Activated naive CD4-positive, alpha-beta T cell treated with anti-CD3 and anti-CD28 coated beads for 36 hours (primary cell): ENCODE measurements at regions of chr3 and their contacts with region 1.

Region 1: GRCh38 chr3:186617038-186617946 is 4.4 kb downstream of the AHSG start:
- DNase-seq: peak; percentile 97
- H3K4me3 Mint-ChIP-seq: peak overlapping the region; percentile 56
- H3K27ac Mint-ChIP-seq: peak overlapping the region; percentile 81
- H3K4me1 Mint-ChIP-seq: peaks cover 18% of the 10 kb centered on the region
- H3K27me3 Mint-ChIP-seq: peaks cover 16% of the 10 kb centered on the region

Region 2: DNA sequence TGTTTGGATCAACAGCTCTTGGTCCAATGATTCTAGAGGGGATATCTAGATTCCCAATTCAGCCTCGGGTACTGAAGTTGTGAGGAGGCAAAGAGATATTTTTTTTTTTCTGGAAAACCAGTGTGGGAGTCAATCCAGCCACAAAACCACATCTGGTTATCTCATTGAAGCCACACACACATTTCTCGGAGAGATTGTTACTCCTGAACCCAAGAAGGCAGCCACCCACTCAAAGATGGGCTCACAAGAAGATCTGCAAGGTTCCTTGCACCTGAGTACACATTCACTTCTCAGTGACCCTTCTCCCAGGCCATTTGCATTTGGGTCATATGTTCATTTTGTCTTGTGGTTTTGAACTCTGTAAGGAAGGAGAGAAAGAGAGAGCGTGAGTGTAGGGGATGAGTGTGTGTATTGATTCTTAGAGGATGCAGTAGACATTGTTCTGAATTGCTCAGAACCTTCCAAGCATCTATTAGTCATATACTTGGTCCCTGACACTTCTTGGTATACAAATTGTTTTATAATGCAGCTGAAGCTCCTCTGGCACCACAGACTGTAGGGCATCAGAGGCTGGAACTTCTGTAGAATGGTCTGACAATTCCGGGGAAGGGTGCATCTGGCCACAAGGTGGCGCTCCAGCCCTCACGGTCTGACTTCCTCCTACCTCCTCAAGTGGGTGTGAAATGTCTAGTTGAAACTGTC is 640.2 kb before region 1 on chr3:
- CTCF ChIA-PET with region 1: interaction called, 10 read pairs
- intact Hi-C with region 1: loop called (anchors 1 kb)
- DNase-seq: peak; percentile 94
- H3K4me3 Mint-ChIP-seq: no peak overlapping the region
- H3K27ac Mint-ChIP-seq: no peak overlapping the region
- H3K4me1 Mint-ChIP-seq: peaks cover 9% of the 10 kb centered on the region
- H3K27me3 Mint-ChIP-seq: no peaks in the 10 kb centered on the region

Region 3: DNA sequence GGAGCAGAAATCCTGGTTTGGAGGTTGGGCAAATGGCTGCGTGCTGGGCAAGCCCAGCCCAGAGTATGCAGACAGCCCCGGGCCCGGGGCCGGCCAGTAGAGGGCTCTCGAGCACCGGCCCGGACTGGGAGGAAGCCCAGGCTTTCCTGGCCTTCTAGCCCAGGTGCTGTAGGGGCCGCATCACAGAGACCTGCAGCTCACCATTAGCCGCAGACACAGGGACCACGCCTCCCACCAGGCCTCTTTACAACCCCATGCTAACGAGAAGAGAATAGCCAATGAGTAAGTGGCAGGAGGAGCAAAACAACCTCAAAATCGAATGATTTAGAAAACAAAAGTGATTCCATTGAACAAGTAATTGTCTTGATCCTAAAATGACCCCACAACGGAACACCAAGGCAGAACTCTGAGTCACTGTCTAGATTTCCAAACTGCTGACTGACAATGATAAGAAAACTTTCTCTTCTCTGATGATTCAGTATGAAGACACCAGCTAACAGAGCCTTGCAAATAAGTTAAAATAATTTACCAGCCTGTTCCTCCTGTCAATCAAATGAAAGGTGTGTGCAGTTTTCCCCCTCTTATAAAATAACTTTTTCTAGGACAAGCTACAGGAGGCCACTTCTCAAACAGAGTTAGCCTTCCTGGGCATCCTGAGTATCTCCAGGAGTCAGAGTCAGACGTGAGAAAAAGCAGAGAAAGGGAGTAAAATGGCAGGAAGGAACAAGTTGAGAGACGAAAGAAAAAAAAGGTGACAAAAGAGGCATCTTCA is 357.5 kb before region 1 on chr3:
- CTCF ChIA-PET with region 1: interaction called, 11 read pairs
- intact Hi-C with region 1: loop called (anchors 1 kb)
- DNase-seq: peak; percentile 78
- H3K4me3 Mint-ChIP-seq: peak overlapping the region; percentile 51
- H3K27ac Mint-ChIP-seq: peak overlapping the region; percentile 37
- H3K4me1 Mint-ChIP-seq: peaks cover 30% of the 10 kb centered on the region
- H3K27me3 Mint-ChIP-seq: peaks cover 2% of the 10 kb centered on the region

Region 4: DNA sequence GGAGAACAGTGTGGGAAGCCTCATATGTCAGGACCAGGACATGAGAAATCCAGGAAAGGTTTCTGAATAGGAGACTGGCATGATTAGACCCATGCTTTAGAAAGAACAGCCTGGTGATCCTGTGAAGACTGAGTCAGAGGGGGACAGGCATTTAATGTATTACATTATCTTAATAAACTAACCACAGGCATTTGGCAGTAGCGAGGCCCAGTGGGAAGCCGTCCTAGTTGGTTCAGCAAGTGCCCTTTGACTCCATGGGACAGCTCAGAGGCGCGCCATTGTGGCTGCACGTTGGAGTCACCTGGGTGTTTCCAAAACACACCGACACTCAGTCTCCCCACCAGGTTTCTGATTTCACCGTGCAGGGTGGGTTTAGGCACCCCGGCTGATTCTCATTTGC is 164.8 kb before region 1 on chr3:
- CTCF ChIA-PET with region 1: no interaction called
- intact Hi-C with region 1: no loop called
- DNase-seq: no peak
- H3K4me3 Mint-ChIP-seq: no peak overlapping the region
- H3K27ac Mint-ChIP-seq: no peak overlapping the region
- H3K4me1 Mint-ChIP-seq: no peaks in the 10 kb centered on the region
- H3K27me3 Mint-ChIP-seq: no peaks in the 10 kb centered on the region

Region 5: GRCh38 chr3:186589121-186589520 is 28.2 kb before region 1 on chr3:
- CTCF ChIA-PET with region 1: interaction called, 35 read pairs
- intact Hi-C with region 1: loop called (anchors 1 kb)
- DNase-seq: no peak
- H3K4me3 Mint-ChIP-seq: no peak overlapping the region
- H3K27ac Mint-ChIP-seq: no peak overlapping the region
- H3K4me1 Mint-ChIP-seq: peaks cover 21% of the 10 kb centered on the region
- H3K27me3 Mint-ChIP-seq: no peaks in the 10 kb centered on the region

Region 6: DNA sequence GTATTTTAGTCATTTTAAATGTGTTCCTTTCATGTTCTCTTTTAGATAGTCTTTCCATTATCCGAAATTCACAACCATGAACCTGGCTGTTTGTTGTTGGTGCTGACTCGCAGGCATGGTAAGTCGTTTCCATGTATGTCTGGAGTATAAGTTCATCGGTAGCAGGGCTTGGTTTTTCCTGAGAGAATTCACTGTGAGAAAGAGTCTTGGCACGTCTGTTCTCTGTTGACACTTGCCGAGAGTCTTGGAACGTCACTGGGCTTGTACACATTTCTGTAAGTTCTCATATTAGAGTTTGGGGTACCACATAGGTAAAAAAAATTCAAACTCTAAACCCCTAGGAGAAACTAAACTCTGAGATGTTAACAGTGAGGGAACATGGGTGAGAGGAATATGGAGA is 136.7 kb after region 1 on chr3:
- CTCF ChIA-PET with region 1: interaction called, 7 read pairs
- intact Hi-C with region 1: loop called (anchors 1 kb)
- DNase-seq: no peak
- H3K4me3 Mint-ChIP-seq: no peak overlapping the region
- H3K27ac Mint-ChIP-seq: no peak overlapping the region
- H3K4me1 Mint-ChIP-seq: peaks cover 12% of the 10 kb centered on the region
- H3K27me3 Mint-ChIP-seq: no peaks in the 10 kb centered on the region

Region 7: GRCh38 chr3:186821429-186822367 is 204.4 kb after region 1 on chr3:
- CTCF ChIA-PET with region 1: interaction called, 99 read pairs
- intact Hi-C with region 1: loop called (anchors 1 kb)
- DNase-seq: peak; percentile 12
- H3K4me3 Mint-ChIP-seq: no peak overlapping the region
- H3K27ac Mint-ChIP-seq: no peak overlapping the region
- H3K4me1 Mint-ChIP-seq: peaks cover 25% of the 10 kb centered on the region
- H3K27me3 Mint-ChIP-seq: peaks cover 12% of the 10 kb centered on the region